Sigmoid colon (tissue), 7 donors: ENCODE measurements at regions of chr19 and their contacts with region 1.

Region 1: GRCh38 chr19:3429581-3430080 is 50.7 kb downstream of the SMIM24 start:
- DNase-seq: peak; percentile 100
- H3K4me3 ChIP-seq: no peak overlapping the region
- H3K27ac ChIP-seq: peak overlapping the region; percentile 83 to 97 (median 92)
- H3K4me1 ChIP-seq: peaks cover 0 to 89% (median 71%) of the 10 kb centered on the region in 4 donors
- H3K27me3 ChIP-seq: no peaks in the 10 kb centered on the region
- CTCF ChIP-seq: peak; percentile 98 to 100 (median 99)
- EP300 ChIP-seq: peak; percentile 100
- POLR2A ChIP-seq: no peak

Region 2: GRCh38 chr19:3324321-3324856 is 105.2 kb before region 1 on chr19:
- intact Hi-C with region 1: loop called (anchors 1 kb)
- DNase-seq: peak; percentile 80
- H3K4me3 ChIP-seq: no peak overlapping the region
- H3K27ac ChIP-seq: no peak overlapping the region
- H3K4me1 ChIP-seq: peaks cover 0 to 9% (median 4%) of the 10 kb centered on the region in 4 donors
- H3K27me3 ChIP-seq: peaks cover 0 to 22% (median 19%) of the 10 kb centered on the region in 3 donors
- CTCF ChIP-seq: peak; percentile 54 to 66 (median 58)
- EP300 ChIP-seq: no peak
- POLR2A ChIP-seq: no peak

Region 3: DNA sequence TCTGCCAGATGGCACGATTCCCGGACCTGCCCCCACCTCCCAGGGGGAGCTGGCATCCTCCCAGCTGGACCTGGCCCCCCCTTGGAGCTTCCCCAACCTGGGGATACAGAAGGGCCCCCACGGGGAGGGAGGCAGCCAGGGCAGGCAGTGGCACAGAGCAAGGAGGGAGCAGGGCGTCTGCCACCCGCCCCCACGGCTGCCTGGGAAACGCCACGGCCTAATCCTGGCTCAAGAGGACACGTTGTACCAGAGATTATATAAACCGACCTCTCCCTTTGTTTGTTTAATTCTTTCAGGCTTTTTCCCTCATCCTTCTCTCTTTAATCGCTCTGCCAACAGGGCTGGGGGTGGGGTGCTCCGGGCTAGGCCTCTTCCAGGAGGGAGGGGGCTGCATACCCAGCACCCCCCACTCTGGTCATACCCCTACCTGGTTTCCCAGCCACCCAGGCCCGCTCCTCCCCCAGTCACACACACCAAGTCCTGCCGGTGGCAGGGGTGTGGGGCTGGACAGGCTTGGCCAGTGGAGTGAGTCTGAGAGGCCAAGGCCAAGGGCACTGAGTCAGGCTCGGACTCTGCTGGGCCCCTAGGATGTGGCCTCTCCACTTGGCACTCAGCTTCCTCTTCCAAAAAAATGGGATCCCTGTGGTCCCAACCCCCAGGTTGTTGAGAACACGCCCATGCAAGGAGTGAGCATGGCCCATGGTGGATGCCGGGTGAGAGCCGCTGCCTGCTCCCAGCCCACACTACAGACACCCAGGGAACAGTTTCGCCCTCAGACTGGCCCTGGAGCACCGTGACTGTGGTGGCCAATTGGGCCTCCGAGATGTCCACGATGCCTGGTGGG is 92.7 kb before region 1 on chr19:
- intact Hi-C with region 1: loop called (anchors 2 kb)
- DNase-seq: peak; percentile 99
- H3K4me3 ChIP-seq: no peak overlapping the region
- H3K27ac ChIP-seq: peak overlapping the region; percentile 93 to 99 (median 97)
- H3K4me1 ChIP-seq: peaks cover 0 to 64% (median 58%) of the 10 kb centered on the region in 4 donors
- H3K27me3 ChIP-seq: no peaks in the 10 kb centered on the region
- CTCF ChIP-seq: no peak
- EP300 ChIP-seq: peak; percentile 95 to 99 (median 98)
- POLR2A ChIP-seq: peak in 1 of 2 donors; percentile 28

Region 4: GRCh38 chr19:3365836-3366752 is 63.5 kb before region 1 on chr19 and contains the start of gene NFIC:
- intact Hi-C with region 1: loop called (anchors 2 kb)
- DNase-seq: peak; percentile 94
- H3K4me3 ChIP-seq: peak within 1 kb of the TSS; percentile 97 to 100 (median 99)
- H3K27ac ChIP-seq: peak within 1 kb of the TSS; percentile 98 to 100 (median 100)
- H3K4me1 ChIP-seq: peaks cover 0 to 71% (median 63%) of the 10 kb centered on the region in 4 donors
- H3K27me3 ChIP-seq: no peaks in the 10 kb centered on the region
- CTCF ChIP-seq: no peak
- EP300 ChIP-seq: peak in 3 of 4 donors; percentile 24 to 75 (median 42)
- POLR2A ChIP-seq: peak in 1 of 2 donors; percentile 12
- total RNA-seq, gene NFIC: 63.2 to 114 (median 74.2) TPM

Region 5: DNA sequence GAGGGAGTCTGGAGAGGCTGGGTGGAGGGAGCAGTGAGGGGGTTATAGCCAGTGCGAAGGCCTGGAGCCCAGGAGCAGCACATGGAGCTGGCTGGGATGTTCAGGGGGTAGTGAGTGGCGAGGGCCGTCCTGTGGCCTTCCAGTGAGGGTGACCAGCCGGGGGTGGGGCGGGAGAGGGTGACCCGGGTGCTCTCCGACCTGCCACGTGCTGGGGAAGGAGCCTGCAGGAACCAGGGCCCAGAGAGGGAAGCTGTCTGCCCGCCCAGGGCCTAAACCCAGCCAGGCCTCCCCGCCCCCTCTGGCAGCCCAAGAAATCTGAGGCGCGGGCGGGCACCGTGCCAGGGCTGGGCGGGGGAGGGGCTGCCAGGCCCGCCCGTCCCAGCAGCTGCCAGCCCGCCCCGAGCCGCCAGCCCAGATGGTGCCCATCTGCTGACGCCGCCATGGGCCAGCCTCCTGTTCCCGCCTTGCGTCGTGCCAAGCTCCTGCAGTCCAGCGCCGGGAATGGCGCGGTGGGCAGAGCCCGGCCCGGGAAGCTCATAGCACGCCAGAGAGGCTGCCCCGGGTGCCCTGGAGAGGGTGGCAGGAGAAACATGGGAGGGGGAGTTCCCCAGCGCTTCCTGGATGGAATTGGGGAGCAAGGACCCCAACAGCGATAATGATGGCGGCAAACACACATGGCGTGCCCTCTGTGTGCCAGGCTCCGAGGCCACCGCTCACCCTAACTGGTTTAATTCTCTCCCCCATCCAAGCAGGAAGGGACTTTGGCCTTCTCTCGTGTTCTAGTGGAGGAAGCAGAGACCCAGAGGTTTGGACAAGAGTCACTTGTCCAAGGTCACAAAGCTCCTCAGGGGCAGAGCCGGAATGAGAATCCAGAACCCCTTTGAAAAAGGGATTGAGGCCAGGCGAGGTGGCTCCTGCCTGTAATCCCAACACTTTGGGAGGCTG is 41.7 kb before region 1 on chr19:
- intact Hi-C with region 1: loop called (anchors 1 kb)
- DNase-seq: peak; percentile 96
- H3K4me3 ChIP-seq: peak overlapping the region in 3 of 4 donors; percentile 9 to 17 (median 12)
- H3K27ac ChIP-seq: peak overlapping the region; percentile 98 to 100 (median 100)
- H3K4me1 ChIP-seq: peaks cover 0 to 93% (median 87%) of the 10 kb centered on the region in 4 donors
- H3K27me3 ChIP-seq: no peaks in the 10 kb centered on the region
- CTCF ChIP-seq: no peak
- EP300 ChIP-seq: peak in 3 of 4 donors; percentile 39 to 61 (median 47)
- POLR2A ChIP-seq: peak in 1 of 2 donors; percentile 6

Region 6: GRCh38 chr19:3398114-3398899 is 31.3 kb before region 1 on chr19:
- intact Hi-C with region 1: no loop called
- DNase-seq: peak; percentile 97
- H3K4me3 ChIP-seq: peak overlapping the region; percentile 18 to 46 (median 40)
- H3K27ac ChIP-seq: peak overlapping the region; percentile 98 to 100 (median 98)
- H3K4me1 ChIP-seq: peaks cover 0 to 94% (median 80%) of the 10 kb centered on the region in 4 donors
- H3K27me3 ChIP-seq: no peaks in the 10 kb centered on the region
- CTCF ChIP-seq: no peak
- EP300 ChIP-seq: peak; percentile 47 to 91 (median 75)
- POLR2A ChIP-seq: peak; percentile 51 to 63

Region 7: DNA sequence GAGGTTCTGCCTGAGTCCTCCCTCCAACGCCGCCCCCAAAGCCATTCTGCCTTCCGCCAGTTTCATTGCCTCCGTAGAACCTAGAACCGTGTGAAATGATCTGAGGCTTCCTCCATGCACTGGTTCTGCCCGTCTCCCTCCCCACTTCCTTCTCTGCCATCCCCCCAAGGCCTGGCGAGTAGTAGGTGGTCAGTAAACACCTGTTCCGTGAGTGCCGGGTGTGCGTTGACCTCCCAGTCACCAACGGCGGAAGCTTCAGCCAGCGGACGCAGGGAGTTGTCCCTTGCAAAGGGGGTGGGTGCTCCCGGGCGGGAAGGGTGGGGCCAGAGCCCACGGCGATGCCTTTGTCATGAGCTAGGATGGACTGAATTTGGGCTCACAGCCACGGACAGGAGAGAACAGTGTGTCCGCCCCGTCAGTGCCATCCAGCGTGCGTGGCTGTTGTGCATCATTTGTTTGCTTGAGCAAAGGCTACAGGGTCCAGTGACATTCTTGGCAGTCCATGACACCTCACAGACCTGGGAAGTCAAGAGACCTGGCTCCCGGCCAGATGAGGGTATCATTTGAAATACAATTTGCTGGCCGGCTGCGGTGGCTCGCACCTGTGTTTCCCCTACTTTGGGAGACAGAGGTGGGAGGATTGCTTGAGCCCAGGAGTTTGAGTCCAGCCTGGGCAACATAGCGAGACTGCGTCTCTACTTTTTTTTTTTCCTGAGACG is 20.1 kb before region 1 on chr19:
- intact Hi-C with region 1: loop called (anchors 1 kb)
- DNase-seq: peak; percentile 98
- H3K4me3 ChIP-seq: peak overlapping the region; percentile 25 to 46 (median 40)
- H3K27ac ChIP-seq: peak overlapping the region; percentile 98 to 100 (median 98)
- H3K4me1 ChIP-seq: peaks cover 0 to 91% (median 83%) of the 10 kb centered on the region in 4 donors
- H3K27me3 ChIP-seq: no peaks in the 10 kb centered on the region
- CTCF ChIP-seq: no peak
- EP300 ChIP-seq: peak; percentile 100
- POLR2A ChIP-seq: peak; percentile 36 to 40

Region 8: GRCh38 chr19:3450796-3451411 is 21.3 kb after region 1 on chr19:
- intact Hi-C with region 1: loop called (anchors 2 kb)
- DNase-seq: peak; percentile 96
- H3K4me3 ChIP-seq: no peak overlapping the region
- H3K27ac ChIP-seq: peak overlapping the region; percentile 80 to 92 (median 86)
- H3K4me1 ChIP-seq: peaks cover 0 to 31% (median 20%) of the 10 kb centered on the region in 4 donors
- H3K27me3 ChIP-seq: no peaks in the 10 kb centered on the region
- CTCF ChIP-seq: no peak
- EP300 ChIP-seq: peak; percentile 96 to 100 (median 98)
- POLR2A ChIP-seq: no peak